ENCODE measurements at regions of chr13 and their contacts with region 1.

Region 1: DNA sequence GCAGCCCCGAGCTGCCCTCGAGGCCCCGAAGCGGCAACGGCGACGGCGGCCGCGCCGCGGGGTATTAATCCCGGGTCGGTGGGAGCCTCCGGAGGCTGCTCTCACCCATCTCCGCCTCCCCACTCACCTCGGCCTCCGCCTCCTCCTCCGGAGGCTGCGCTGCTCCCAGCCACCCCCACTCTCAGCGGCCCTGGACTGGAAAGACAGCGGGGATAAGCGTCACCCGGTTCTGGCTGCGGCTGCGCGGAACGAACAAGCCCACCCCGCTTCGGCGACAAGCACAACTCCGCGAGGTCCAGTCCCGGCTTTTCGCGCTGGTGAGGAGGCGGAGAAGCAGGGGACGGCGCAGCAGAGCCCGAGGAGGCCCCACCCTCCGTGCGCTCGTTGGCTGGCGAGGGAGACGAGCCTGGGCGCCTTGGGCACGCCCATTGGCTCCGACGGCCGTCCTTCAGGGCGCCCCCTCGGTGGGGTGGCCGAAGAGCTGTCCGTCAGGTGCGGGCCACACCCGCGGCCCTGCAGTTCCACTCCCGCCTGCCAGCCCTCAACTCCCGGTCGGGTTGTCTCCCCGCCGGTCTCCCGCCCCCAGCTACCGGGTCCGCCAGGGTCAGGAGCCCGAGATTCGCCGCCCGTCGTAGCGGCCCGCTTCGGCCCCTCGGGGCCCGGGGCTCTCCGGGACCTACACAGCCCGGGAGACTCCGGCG is at the start of gene ZMYM5:
- DNase-seq: peak; percentile 99 to 100
- H3K4me3 ChIP-seq: peak within 1 kb of the TSS; percentile 77
- H3K4me3 Mint-ChIP-seq: peak within 1 kb of the TSS; percentile 87
- H3K27ac Mint-ChIP-seq: peak within 1 kb of the TSS; percentile 87
- H3K4me1 ChIP-seq: peaks cover 12% of the 10 kb centered on the region
- H3K4me1 Mint-ChIP-seq: peaks cover 14% of the 10 kb centered on the region
- H3K27me3 ChIP-seq: no peaks in the 10 kb centered on the region
- H3K27me3 Mint-ChIP-seq: no peaks in the 10 kb centered on the region
- CTCF ChIP-seq: no peak
- total RNA-seq, gene ZMYM5: 15.5 and 16.7 TPM in 2 replicates

Region 2: DNA sequence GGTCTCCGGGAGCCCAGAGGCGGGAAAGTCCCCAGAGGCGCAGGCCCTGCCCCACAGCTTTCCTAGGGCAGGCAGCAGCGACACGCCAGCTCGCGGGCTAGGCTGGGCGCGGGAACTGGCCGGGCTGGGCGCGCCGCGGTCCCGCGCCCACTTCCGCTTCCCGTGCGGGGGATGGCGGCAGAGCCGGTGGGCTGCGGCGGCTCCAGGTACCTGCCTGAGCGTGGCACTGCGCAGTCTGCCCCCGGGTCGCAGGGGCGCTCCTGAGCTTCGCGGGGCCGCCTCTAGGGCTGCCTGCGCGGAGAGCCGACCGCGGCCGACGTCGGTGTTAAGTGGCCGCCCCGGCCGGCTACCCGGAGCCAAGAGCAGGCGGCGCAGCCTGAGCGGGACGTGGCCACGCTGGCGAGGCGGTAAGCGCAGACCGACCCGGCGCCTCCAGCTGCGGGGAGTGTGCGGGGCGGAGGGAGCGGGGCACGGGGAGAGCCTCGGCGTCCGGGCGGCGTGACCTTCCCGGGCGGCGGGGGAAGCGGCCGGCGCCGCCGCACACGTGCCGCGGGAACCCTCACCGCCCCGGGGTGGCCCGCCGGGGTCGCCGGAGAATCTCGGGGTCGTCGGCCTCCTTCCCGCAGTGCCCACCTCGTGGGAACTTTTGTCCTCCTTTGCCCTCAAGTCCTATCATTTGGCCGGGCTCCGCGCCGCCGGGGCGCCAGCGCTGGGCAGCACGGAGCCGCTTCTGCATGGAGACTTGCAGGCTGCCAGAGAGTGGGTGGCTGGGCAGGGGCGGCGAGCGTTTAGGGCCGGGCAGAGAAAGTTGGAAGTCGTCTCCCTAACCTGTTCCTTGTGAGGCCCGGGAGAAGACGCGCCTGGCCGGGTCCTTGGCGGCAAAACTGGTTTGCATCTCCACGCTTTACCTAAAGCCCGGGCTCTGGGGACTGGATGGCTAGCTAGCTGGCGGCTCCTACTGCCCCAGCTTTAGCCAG is 261.4 kb before region 1 on chr13:
- CTCF ChIA-PET with region 1: no interaction called
- POLR2A ChIA-PET with region 1: no interaction called
- intact Hi-C with region 1: loop called (anchors 5 kb)
- DNase-seq: peak; percentile 81 to 89
- H3K4me3 ChIP-seq: peak overlapping the region; percentile 81
- H3K4me3 Mint-ChIP-seq: peak overlapping the region; percentile 80
- H3K27ac Mint-ChIP-seq: peak overlapping the region; percentile 26
- H3K4me1 ChIP-seq: peaks cover 48% of the 10 kb centered on the region
- H3K4me1 Mint-ChIP-seq: peaks cover 23% of the 10 kb centered on the region
- H3K27me3 ChIP-seq: no peaks in the 10 kb centered on the region
- H3K27me3 Mint-ChIP-seq: no peaks in the 10 kb centered on the region
- CTCF ChIP-seq: peak in 1 of 2 experiments; percentile 41

Region 3: GRCh38 chr13:19794635-19795423 is 68.6 kb before region 1 on chr13:
- CTCF ChIA-PET with region 1: no interaction called
- POLR2A ChIA-PET with region 1: interaction called, 3 read pairs
- intact Hi-C with region 1: loop called (anchors 1 kb)
- DNase-seq: peak; percentile 90 to 92
- H3K4me3 ChIP-seq: no peak overlapping the region
- H3K4me3 Mint-ChIP-seq: peak overlapping the region; percentile 69
- H3K27ac Mint-ChIP-seq: peak overlapping the region; percentile 99
- H3K4me1 ChIP-seq: peaks cover 49% of the 10 kb centered on the region
- H3K4me1 Mint-ChIP-seq: peaks cover 32% of the 10 kb centered on the region
- H3K27me3 ChIP-seq: no peaks in the 10 kb centered on the region
- H3K27me3 Mint-ChIP-seq: no peaks in the 10 kb centered on the region
- CTCF ChIP-seq: no peak

Region 4: GRCh38 chr13:19959831-19960652 is 96.6 kb after region 1 on chr13:
- CTCF ChIA-PET with region 1: no interaction called
- POLR2A ChIA-PET with region 1: interaction called, 4 read pairs
- intact Hi-C with region 1: loop called (anchors 2 kb)
- DNase-seq: peak; percentile 91 to 94
- H3K4me3 ChIP-seq: peak overlapping the region; percentile 91
- H3K4me3 Mint-ChIP-seq: peak overlapping the region; percentile 99
- H3K27ac Mint-ChIP-seq: peak overlapping the region; percentile 96
- H3K4me1 ChIP-seq: peaks cover 5% of the 10 kb centered on the region
- H3K4me1 Mint-ChIP-seq: peaks cover 7% of the 10 kb centered on the region
- H3K27me3 ChIP-seq: no peaks in the 10 kb centered on the region
- H3K27me3 Mint-ChIP-seq: no peaks in the 10 kb centered on the region
- CTCF ChIP-seq: peak; percentile 79 to 93

Region 5: GRCh38 chr13:20024702-20025101 is 161.2 kb after region 1 on chr13:
- CTCF ChIA-PET with region 1: no interaction called
- POLR2A ChIA-PET with region 1: no interaction called
- intact Hi-C with region 1: no loop called
- DNase-seq: no peak
- H3K4me3 ChIP-seq: no peak overlapping the region
- H3K4me3 Mint-ChIP-seq: no peak overlapping the region
- H3K27ac Mint-ChIP-seq: no peak overlapping the region
- H3K4me1 ChIP-seq: no peaks in the 10 kb centered on the region
- H3K4me1 Mint-ChIP-seq: peaks cover 8% of the 10 kb centered on the region
- H3K27me3 ChIP-seq: no peaks in the 10 kb centered on the region
- H3K27me3 Mint-ChIP-seq: no peaks in the 10 kb centered on the region
- CTCF ChIP-seq: no peak

Region 6: DNA sequence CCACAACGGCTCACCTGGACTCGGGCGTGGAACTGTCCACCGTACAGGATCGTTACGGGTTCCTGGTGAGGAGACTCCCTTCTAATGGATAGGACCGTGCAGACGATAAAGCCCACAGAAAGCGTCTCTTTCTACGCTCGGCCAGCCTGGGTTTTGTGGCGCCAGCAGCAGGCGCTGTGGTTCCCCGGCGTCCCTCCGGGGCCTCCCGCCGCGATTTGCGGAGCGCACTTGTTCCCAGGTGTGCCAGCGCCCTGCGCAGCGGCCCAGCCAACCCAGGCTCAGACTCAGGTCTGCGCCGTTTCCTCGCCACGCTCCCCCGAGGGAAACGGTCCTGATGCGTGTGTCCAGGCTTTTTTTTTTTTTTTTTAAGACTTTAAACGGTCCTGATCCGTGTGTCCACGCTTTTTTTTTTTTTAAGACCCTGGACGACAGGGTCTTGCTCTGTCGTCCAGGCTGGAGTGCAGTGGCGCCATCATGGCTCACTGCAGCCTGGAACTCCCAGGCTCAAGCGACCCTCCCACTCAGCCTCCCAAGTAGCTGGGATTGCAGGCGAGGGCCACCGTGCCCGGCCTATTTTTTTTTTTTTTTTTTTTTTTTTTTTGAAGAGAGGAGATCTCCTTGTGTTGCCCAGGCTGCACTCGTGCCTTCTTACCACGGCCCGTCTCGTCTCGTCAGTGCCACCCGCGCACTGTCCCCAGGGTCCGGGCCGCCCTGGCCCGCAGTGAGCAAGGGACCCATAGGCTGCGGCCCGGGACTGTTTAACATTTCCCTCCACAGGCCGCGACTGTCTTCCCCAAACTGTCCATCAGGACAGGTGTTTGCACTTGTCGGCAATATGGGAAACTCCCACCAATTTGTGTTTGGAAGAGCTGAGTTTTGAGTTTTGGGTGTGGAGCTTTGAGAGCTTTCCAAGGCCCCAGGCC is 273.6 kb after region 1 on chr13:
- CTCF ChIA-PET with region 1: interaction called, 10 read pairs
- POLR2A ChIA-PET with region 1: no interaction called
- intact Hi-C with region 1: no loop called
- DNase-seq: peak; percentile 54 to 76
- H3K4me3 ChIP-seq: peak overlapping the region; percentile 30
- H3K4me3 Mint-ChIP-seq: peak overlapping the region; percentile 54
- H3K27ac Mint-ChIP-seq: no peak overlapping the region
- H3K4me1 ChIP-seq: peaks cover 4% of the 10 kb centered on the region; the same call in 1 of the 2 replicates
- H3K4me1 Mint-ChIP-seq: no peaks in the 10 kb centered on the region
- H3K27me3 ChIP-seq: no peaks in the 10 kb centered on the region
- H3K27me3 Mint-ChIP-seq: no peaks in the 10 kb centered on the region
- CTCF ChIP-seq: peak; percentile 51 to 82